Heart left ventricle (tissue), 16 donors: ENCODE measurements at regions of chr4 and their contacts with region 1.

Region 1: DNA sequence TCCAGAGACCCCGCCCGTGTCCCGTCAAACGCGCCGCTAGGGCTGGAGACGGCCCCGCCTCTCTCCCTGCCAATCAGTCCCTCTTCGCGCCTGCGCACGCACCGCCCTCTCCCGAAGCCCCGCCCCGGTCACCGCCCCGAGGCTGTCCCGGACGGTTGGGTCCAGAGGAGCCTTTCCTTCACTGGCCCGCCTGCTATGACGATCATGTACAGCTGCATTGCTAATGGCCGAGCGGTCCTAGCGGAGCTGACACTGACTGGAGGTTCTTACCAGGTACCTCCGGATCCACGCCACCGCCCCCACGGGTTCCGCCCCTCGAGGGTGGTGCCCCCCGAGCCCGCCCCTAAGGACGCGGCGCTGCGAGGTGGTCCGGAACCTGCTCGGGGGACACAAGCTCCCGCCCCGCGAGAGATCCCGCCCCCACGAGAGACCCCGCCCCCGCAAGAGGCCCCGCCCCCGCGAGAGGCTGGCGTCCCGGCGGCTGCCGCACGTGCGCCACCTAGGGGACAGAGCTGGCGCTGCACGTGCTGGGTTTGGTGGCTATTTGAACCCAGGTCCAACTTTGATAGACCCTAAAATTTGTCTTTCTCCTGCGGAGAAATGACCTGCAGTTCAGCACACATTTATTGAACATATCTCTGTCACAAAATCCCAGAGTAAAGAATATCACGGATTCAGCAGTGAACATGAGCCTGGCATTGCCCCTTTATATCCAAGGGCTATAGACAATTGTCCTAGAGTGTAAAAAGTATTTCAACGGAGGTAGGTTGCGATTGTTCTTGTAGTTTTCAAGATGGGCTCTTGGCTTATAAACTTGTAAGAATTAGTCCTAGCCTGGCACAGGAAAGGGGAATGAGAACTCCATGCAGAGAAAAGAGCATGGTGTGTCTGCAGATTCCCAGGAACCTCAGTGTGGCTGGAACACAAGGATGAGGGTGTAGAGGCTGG is 88.7 kb downstream of the HNRNPD start:
- DNase-seq: peak; percentile 99 to 100 (median 99)
- ATAC-seq: peak; percentile 100
- H3K4me3 ChIP-seq: peak overlapping the region; percentile 12 to 61 (median 55)
- H3K27ac ChIP-seq: peak overlapping the region in 10 of 12 donors; percentile 16 to 75 (median 50)
- H3K4me1 ChIP-seq: peaks cover 0 to 9% (median 5%) of the 10 kb centered on the region in 12 donors
- H3K27me3 ChIP-seq: no peaks in the 10 kb centered on the region
- CTCF ChIP-seq: peak; percentile 85 to 99 (median 95)
- POLR2A ChIP-seq: peak in 1 of 2 donors; percentile 36

Region 2: DNA sequence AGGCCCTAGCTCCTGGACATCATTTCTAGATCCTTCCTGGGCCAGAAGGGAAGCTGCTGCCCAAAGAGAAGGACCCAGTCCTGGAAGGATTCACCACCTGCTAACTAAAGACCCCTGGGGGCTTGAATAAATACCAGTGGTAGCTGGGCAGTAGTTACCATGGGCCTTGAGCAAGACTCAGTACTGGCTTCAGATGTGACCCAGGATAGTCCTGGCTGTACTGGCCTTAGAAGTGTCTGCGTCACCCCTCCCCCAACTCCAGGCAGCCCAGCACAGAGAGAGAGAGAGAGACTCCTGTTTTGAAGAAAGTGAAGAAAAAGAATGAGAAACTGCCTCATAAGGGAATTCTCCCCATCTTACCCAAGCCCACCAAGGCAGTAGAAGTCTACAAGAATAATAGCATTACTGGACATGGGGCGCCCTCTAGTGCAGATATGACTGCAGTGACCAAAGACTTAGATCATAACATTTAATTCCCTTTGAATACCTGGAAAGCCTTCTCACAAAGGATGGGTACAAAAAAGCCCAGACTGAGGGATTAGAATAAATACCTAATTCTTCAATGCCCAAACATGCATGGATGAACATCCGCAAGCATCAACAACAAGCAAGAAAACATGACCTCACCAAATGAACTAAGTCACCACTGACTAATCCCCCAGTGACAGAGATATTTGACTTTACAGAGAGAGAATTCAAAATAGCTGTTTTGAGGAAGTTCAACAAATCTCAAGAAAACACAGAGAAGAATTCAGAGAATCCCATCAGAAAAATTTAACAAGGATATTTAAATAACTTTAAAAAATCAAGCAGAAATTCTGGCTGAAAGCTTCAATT is 83.1 kb before region 1 on chr4:
- intact Hi-C with region 1: no loop called
- DNase-seq: peak in 2 of 5 donors; percentile 10 to 40
- ATAC-seq: peak in 1 of 4 donors; percentile 51
- H3K4me3 ChIP-seq: no peak overlapping the region
- H3K27ac ChIP-seq: no peak overlapping the region
- H3K4me1 ChIP-seq: no peaks in the 10 kb centered on the region
- H3K27me3 ChIP-seq: no peaks in the 10 kb centered on the region
- CTCF ChIP-seq: peak; percentile 19 to 60 (median 52)
- POLR2A ChIP-seq: no peak

Region 3: DNA sequence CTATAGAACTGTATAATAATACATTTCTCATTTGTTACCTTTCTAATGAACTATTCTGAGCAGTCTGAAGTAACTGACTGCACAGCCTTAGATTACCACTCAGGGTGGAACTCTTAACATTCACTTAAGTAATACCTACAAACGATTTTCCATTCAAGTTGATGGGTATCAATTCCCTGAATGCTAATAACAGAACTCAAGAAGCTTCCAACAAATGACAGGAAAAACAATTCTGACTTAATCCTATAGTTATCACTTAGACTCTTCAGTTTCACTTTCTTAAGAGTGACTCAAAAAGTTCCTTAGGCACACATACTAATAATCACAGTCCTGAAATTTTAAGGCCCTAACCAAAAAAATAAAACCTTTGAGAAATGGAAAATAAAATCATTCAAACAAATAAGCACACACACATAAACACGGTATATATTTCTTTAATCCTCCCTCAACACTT is 67.8 kb after region 1 on chr4:
- intact Hi-C with region 1: loop called in 1 of 10 experiments (anchors 5 kb)
- DNase-seq: no peak
- ATAC-seq: no peak
- H3K4me3 ChIP-seq: no peak overlapping the region
- H3K27ac ChIP-seq: peak overlapping the region in 1 of 12 donors; percentile 40
- H3K4me1 ChIP-seq: peaks cover 0 to 27% (median 4%) of the 10 kb centered on the region in 12 donors
- H3K27me3 ChIP-seq: no peaks in the 10 kb centered on the region
- CTCF ChIP-seq: no peak
- POLR2A ChIP-seq: no peak

Region 4: DNA sequence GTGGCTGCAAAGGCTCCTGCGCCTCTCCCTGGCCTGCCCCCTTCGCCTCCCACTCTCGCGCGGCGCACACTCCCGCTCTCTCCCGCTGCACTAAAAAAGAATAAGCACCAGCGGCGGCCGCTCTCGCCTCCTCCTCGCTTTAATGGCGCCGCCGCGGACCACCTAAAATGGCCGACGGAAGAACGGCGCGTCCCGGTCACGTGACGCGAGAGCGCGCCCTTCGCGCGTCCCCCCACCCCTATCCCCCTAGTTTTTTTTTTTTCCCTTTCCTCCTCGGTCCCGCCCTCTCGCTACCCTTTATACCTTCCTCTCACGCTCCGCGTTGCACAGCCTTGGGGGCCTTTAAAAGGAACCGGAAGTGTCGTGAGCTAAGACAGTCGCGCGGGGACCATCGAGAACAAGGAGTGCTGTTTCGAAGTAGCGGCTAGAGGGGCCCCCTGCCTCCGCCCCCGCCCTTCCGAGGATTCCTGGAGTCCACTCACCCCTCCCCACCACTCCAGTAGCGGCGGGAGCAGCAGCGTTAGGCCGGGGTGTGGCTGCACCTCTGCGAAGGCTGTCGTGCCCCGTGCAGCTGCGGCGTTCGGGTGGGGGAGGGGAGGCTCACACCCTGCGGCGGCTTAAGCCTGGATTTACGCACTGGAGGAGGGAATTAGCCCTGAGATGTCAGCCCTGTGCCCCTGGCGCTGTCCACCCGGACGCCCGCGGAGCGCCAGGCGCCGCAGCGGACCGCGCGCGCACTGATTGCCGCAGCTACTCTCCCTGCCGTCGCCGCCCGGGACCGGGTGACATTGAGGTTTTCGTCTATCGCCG is 88.9 kb after region 1 on chr4 and contains the start of gene HNRNPD:
- intact Hi-C with region 1: loop called in 6 of 10 experiments (anchors 5 to 10 kb)
- DNase-seq: peak; percentile 98 to 99 (median 98)
- ATAC-seq: peak; percentile 92 to 97 (median 96)
- H3K4me3 ChIP-seq: peak within 1 kb of the TSS; percentile 73 to 99 (median 94)
- H3K27ac ChIP-seq: peak within 1 kb of the TSS; percentile 94 to 100 (median 99)
- H3K4me1 ChIP-seq: peaks cover 12 to 48% (median 34%) of the 10 kb centered on the region in 12 donors
- H3K27me3 ChIP-seq: no peaks in the 10 kb centered on the region
- CTCF ChIP-seq: peak in 1 of 12 donors; percentile 30
- POLR2A ChIP-seq: peak; percentile 3 to 90
- total RNA-seq, gene HNRNPD: 33.8 to 150 (median 122) TPM

Region 5: DNA sequence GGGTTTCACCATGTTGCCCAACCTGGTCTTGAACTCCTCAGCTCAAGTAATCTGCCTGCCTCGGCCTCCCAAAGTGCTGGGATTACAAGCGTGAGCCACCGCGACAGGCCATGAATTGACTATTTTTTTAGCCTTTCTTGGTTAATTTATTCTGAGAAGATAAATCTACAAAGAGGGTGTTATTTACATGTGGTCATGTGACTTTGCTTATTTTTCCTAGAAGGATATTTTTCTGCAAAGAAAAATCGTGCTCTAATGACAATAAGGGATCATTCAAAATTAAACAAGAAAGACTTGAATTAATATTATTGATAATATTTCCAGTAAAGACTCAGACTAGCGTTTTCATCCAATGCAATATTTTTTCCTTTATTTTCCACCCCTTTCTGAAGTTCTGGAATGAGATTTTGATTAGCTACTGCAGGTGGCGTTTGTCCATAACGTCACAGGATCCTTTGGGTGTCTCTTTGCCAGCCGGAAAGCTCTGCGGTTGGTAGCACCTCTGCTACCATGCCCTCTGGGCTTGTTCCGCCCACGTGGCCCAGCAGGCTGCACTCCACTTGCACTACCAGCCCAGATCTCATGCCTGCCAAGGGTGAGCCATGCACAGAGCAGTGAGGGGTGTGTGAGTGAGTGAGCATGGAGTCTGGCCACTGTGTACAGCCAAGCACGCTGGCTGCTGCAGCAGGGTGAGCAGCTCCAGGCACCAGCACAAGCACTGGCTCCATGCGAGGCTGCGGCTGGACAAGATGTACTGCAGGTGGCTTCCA is 95.0 kb after region 1 on chr4:
- intact Hi-C with region 1: loop called in 4 of 10 experiments (anchors 5 to 10 kb)
- DNase-seq: peak; percentile 61 to 84 (median 72)
- ATAC-seq: peak; percentile 96 to 98 (median 98)
- H3K4me3 ChIP-seq: no peak overlapping the region
- H3K27ac ChIP-seq: peak overlapping the region in 7 of 12 donors; percentile 24 to 70 (median 57)
- H3K4me1 ChIP-seq: peaks cover 0 to 33% (median 16%) of the 10 kb centered on the region in 12 donors
- H3K27me3 ChIP-seq: no peaks in the 10 kb centered on the region
- CTCF ChIP-seq: no peak
- POLR2A ChIP-seq: no peak

Region 6: GRCh38 chr4:82428969-82429727 is 144.0 kb after region 1 on chr4:
- intact Hi-C with region 1: loop called in 6 of 10 experiments (anchors 2 to 10 kb)
- DNase-seq: peak; percentile 93 to 97 (median 93)
- ATAC-seq: peak; percentile 76 to 86 (median 85)
- H3K4me3 ChIP-seq: peak overlapping the region; percentile 63 to 99 (median 90)
- H3K27ac ChIP-seq: peak overlapping the region; percentile 91 to 100 (median 98)
- H3K4me1 ChIP-seq: peaks cover 0 to 60% (median 31%) of the 10 kb centered on the region in 12 donors
- H3K27me3 ChIP-seq: no peaks in the 10 kb centered on the region
- CTCF ChIP-seq: peak; percentile 90 to 100 (median 98)
- POLR2A ChIP-seq: peak in 1 of 2 donors; percentile 69

Region 7: GRCh38 chr4:82484996-82485783 is 200.1 kb after region 1 on chr4:
- intact Hi-C with region 1: no loop called
- DNase-seq: peak in 2 of 5 donors; percentile 32 to 57
- ATAC-seq: peak in 3 of 4 donors; percentile 31 to 70 (median 56)
- H3K4me3 ChIP-seq: no peak overlapping the region
- H3K27ac ChIP-seq: no peak overlapping the region
- H3K4me1 ChIP-seq: peaks cover 0 to 7% (median 1%) of the 10 kb centered on the region in 12 donors
- H3K27me3 ChIP-seq: no peaks in the 10 kb centered on the region
- CTCF ChIP-seq: no peak
- POLR2A ChIP-seq: no peak

Region 8: DNA sequence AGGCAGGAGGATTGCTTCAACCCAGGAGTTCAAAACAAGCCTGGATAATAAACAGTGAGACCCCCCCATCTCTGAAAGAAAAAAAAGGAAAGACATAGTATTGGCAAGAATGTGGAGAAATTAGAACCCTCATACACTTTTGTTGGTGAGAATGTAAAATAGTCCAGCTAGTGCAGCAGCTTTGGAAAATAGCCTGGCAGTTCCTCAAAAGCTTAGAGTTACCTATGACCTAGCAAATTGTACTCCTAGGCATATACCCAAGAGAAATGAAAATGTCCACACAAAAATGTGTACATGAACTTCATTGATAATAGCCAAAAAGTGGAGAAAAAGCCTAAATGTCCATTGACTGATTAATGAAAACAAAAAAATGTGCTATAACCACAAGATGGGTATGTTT is 636.7 kb after region 1 on chr4:
- intact Hi-C with region 1: loop called in 1 of 10 experiments (anchors 10 kb)
- DNase-seq: no peak
- ATAC-seq: no peak
- H3K4me3 ChIP-seq: no peak overlapping the region
- H3K27ac ChIP-seq: no peak overlapping the region
- H3K4me1 ChIP-seq: no peaks in the 10 kb centered on the region
- H3K27me3 ChIP-seq: no peaks in the 10 kb centered on the region
- CTCF ChIP-seq: no peak
- POLR2A ChIP-seq: no peak